Gastrocnemius medialis (tissue), 4 donors: ENCODE measurements at regions of chr3 and their contacts with region 1.

Region 1: DNA sequence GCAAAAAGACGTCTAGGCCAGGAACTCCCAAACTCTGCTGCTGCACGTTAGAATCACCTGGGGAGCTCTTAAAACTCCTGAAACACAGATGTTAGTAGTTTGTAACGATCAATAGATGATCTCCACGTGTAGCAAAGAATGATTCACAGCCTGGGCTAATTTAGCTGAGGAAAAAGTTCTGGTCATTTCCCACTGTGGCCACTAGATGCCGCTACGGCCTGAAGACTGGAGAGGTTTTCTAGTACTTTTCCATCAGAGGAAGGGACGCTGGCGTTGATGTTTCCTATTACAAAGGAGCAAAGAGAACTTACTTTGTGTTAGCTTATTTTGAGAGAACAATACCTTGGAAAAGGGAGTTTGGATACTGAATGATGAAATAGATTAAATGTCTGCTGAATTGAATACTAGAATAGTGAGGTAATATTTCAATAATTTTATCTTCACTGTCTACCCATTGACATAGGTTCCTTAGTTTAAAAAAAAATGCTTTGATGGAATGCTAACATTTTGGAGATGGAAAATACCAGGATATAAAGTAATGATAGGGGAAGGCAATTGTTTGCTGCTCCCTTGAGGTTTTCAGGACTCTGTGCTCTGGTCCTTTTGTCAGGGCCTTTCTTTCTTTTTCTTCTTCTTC is 159.1 kb downstream of the P3H2 start:
- DNase-seq: peak; percentile 20 to 60
- ATAC-seq: peak; percentile 85 to 92
- H3K4me3 ChIP-seq: no peak overlapping the region
- H3K27ac ChIP-seq: no peak overlapping the region
- H3K4me1 ChIP-seq: peaks cover 0 to 6% of the 10 kb centered on the region in 2 donors
- H3K27me3 ChIP-seq: no peaks in the 10 kb centered on the region
- CTCF ChIP-seq: peak; percentile 60 to 91 (median 80)
- POLR2A ChIP-seq: no peak

Region 2: DNA sequence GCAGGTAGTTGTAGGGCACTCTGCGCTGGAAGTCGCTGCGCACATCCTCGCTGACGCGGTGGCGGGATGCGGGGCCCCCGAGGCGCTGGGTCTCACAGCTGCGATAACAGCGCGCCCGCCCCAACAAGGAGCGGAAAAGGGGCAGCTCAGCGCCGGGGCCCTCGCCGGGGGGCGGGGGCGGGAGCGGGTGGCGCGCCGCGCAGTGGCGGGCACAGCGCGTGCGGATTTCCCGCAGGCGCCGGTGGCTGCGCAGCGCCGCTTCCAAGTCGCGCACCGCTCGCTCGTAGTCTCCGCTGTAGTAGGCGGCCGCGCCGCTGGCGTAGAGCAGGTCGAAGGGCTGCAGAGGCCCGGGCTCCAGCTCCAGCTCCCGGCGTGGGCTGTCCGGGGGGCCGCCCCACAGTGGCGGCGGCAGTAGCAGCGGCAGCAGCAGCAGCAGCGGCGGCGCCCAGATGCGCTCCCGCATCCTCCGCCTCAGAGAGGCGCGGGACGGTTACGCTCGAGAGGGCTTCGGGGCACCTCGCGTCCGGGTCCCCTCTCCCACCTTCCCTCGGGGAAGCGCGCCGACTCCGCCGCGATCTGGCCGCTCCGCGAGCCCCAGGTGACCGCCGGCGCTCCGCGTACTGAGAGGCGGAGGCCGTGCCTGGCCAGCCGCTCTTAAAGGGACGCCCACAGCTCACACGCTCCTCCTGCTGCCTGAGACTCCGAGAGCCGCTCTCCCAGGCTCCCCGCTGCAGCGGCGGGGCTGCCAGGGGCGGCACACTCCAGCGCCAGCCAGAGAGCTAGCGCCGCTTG is 158.8 kb after region 1 on chr3 and contains the start of gene P3H2:
- in situ Hi-C with region 1: no loop called
- intact Hi-C with region 1: loop called (anchors 10 kb)
- DNase-seq: peak; percentile 36 to 44
- ATAC-seq: peak; percentile 74 to 81
- H3K4me3 ChIP-seq: peak within 1 kb of the TSS; percentile 58 to 89 (median 69)
- H3K27ac ChIP-seq: peak within 1 kb of the TSS in 3 of 4 donors; percentile 3 to 57 (median 41)
- H3K4me1 ChIP-seq: peaks cover 0 to 7% of the 10 kb centered on the region in 2 donors
- H3K27me3 ChIP-seq: no peaks in the 10 kb centered on the region
- CTCF ChIP-seq: peak in 2 of 5 experiments; percentile 26 to 42
- POLR2A ChIP-seq: no peak
- total RNA-seq, gene P3H2: 0.24 to 4.0 (median 0.90) TPM

Region 3: DNA sequence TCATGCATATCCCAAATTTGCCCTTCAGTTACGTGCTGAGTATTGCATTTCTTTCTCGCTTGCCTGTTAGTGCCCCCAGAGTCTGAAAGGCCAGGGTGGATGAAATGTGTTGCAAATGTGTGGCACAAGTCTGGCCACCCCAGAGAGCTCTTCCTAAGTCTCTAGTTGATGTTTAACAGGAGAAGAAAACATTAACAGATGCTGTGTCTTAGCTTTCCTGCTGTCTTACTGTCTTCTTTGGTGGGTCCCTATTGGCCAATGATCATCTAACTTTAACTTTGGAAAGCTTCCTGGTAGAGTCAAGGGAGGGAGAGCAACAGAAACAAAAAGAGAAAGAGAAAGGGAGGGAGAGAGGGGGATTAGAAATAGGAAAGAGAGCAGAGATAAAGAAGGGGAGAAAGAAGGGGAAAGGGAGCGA is 235.7 kb after region 1 on chr3:
- in situ Hi-C with region 1: loop called in 2 of 4 experiments (anchors 5 kb)
- intact Hi-C with region 1: no loop called
- DNase-seq: no peak
- ATAC-seq: no peak
- H3K4me3 ChIP-seq: no peak overlapping the region
- H3K27ac ChIP-seq: no peak overlapping the region
- H3K4me1 ChIP-seq: no peaks in the 10 kb centered on the region
- H3K27me3 ChIP-seq: no peaks in the 10 kb centered on the region
- CTCF ChIP-seq: no peak
- POLR2A ChIP-seq: no peak

Region 4: DNA sequence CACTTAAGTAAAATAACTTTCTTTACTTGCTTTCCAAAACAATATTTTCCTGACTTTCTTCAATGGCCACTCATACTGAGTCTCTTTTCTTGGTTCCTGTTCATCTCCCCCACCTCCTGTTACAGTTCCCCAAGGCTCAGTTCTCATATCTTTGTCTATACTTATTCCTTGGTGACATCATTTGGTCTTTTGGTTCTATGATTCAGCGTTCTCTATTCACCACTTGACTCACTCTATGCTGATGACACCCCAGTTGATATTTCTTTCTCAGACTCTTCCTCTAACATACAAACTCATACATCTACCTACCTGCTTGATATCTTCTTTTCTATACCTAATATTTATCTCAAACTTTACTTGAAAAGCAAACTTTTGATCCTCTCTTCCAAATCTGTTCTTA is 244.1 kb after region 1 on chr3:
- in situ Hi-C with region 1: loop called in 2 of 4 experiments (anchors 5 to 10 kb)
- intact Hi-C with region 1: no loop called
- DNase-seq: no peak
- ATAC-seq: no peak
- H3K4me3 ChIP-seq: no peak overlapping the region
- H3K27ac ChIP-seq: no peak overlapping the region
- H3K4me1 ChIP-seq: no peaks in the 10 kb centered on the region
- H3K27me3 ChIP-seq: no peaks in the 10 kb centered on the region
- CTCF ChIP-seq: no peak
- POLR2A ChIP-seq: no peak

Region 5: DNA sequence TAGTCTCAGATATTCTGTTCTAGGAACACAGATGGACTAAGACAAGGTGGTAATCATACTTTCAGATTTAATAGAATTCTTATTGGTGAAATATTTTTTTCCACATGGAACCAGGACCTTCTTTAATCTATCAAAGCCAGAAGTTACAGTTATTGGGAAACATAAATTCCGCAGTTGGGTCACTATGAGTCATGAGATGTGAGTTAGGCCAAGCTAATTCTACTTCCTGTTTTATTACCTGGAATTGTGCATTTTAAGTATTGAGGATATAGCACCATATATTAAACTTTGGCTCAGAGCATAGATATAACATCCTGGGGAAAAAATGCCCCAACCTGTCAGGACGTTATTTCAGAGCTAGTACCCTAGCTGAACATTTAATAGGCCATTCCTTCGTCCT is 255.4 kb after region 1 on chr3:
- in situ Hi-C with region 1: loop called in 1 of 4 experiments (anchors 10 kb)
- intact Hi-C with region 1: no loop called
- DNase-seq: no peak
- ATAC-seq: no peak
- H3K4me3 ChIP-seq: no peak overlapping the region
- H3K27ac ChIP-seq: no peak overlapping the region
- H3K4me1 ChIP-seq: no peaks in the 10 kb centered on the region
- H3K27me3 ChIP-seq: no peaks in the 10 kb centered on the region
- CTCF ChIP-seq: no peak
- POLR2A ChIP-seq: no peak

Region 6: DNA sequence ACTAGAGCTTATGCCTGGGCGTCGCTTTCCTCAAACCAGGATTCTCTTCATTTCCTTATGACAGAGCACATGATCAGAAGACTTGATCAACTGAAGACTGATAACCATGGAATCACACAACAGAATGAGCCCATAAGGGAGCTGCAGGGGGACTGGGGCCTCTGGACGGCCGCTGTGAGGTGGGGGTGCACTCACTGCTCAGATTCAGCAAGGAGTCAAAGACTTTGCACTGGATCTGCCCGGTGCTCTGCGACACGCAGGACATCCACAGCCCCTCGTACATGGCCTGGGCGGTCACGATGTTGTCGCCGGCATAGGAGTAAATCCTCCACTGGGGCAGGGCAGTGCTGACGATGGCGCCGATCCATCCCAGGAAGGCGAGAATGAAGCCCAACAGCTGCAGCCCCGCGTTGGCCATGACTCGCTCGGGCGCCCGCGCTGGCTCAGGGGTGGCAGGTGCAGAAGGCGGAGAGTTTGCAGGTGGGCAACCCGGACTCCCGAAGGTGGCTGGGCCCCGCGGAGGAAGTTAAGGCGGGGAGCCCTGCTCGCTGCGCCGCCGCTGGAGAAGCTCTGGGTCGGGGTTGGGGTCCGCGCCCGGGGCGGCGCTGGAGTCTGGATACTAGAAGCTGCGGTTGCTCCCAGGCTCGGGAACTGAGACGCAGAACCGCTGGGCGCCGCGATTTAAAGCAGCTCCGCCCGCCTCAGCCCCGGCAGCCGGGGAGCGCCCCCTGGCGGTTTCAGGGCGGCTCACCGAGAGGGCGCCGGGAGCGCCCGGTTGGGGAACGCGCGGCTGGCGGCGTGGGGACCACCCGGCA is 360.4 kb after region 1 on chr3 and contains the start of gene CLDN1:
- in situ Hi-C with region 1: loop called (anchors 5 to 10 kb)
- intact Hi-C with region 1: loop called (anchors 2 kb)
- DNase-seq: peak; percentile 47 to 57
- ATAC-seq: peak; percentile 83 to 92
- H3K4me3 ChIP-seq: peak within 1 kb of the TSS; percentile 54 to 86 (median 60)
- H3K27ac ChIP-seq: no peak within 1 kb of the TSS
- H3K4me1 ChIP-seq: peaks cover 4 to 9% of the 10 kb centered on the region in 2 donors
- H3K27me3 ChIP-seq: peaks cover 0 to 5% (median 0%) of the 10 kb centered on the region in 3 donors
- CTCF ChIP-seq: peak; percentile 76 to 91 (median 91)
- POLR2A ChIP-seq: no peak
- total RNA-seq, gene CLDN1: 0.25 to 1.00 (median 0.36) TPM in 3 of 4 donors, not detected in the other

Region 7: DNA sequence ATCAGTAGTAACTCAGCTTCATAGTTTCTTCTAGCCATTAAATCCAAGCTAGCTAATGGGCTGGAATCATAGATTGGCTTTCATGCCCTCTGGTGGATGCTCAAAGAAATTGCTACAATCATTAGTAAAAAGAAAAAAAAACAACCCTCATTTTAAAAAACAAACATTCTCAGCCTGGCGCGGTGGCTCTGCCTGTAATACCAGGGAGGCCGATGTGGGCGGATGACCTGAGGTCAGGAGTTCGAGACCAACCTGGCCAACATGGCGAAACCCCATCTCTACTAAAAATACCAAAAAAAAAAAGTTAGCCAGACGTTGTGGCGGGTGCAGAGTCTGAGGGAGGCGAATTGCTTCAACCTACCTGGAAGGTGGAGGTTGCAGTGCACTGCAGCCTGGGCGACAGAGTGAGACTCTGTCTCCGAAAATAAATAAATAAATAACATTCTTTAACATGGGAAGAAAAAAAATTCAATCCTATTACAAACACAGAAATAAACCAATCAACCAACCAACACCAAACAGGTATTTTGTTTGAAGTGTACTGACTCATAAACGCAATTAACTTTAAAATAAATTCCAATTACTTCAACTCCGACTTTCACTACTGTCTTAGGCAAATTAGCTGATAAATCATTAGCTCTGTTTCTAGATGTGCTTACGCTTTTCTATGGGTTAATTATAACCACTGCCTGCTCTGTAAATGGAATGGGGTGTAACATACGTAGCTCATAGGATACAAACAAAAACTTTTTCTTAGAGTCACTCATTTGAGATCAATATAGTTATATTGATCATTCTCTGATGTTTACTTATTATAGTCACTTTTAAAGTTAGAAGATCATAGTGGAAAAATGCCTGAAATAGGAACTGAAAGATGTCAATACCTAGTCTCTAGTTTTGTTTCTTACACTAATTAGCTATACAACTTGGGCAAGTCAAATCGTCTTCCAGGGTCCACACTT is 463.1 kb after region 1 on chr3:
- in situ Hi-C with region 1: no loop called
- intact Hi-C with region 1: loop called (anchors 5 kb)
- DNase-seq: no peak
- ATAC-seq: peak in 1 of 2 donors; percentile 56
- H3K4me3 ChIP-seq: peak overlapping the region in 2 of 4 donors; percentile 7 to 27
- H3K27ac ChIP-seq: no peak overlapping the region
- H3K4me1 ChIP-seq: peaks cover 0 to 3% of the 10 kb centered on the region in 2 donors
- H3K27me3 ChIP-seq: no peaks in the 10 kb centered on the region
- CTCF ChIP-seq: peak; percentile 8 to 57 (median 28)
- POLR2A ChIP-seq: no peak